Activated CD4-positive, alpha-beta memory T cell treated with anti-CD3 and anti-CD28 coated beads for 36 hours (primary cell): ENCODE measurements at regions of chr7 and their contacts with region 1.

Region 1: GRCh38 chr7:99504603-99505323 is at the start of gene ZKSCAN5:
- DNase-seq: peak; percentile 98
- H3K4me3 Mint-ChIP-seq: peak within 1 kb of the TSS; percentile 96
- H3K27ac Mint-ChIP-seq: peak within 1 kb of the TSS; percentile 98
- H3K4me1 Mint-ChIP-seq: peaks cover 21% of the 10 kb centered on the region
- H3K27me3 Mint-ChIP-seq: no peaks in the 10 kb centered on the region
- total RNA-seq, gene ZKSCAN5: 7.6 to 7.7 TPM

Region 2: GRCh38 chr7:99408379-99409191 is 96.2 kb before region 1 on chr7 and contains the starts of genes BUD31 and PDAP1:
- CTCF ChIA-PET with region 1: interaction called, 4 read pairs
- POLR2A ChIA-PET with region 1: no interaction called
- intact Hi-C with region 1: loop called (anchors 2 kb)
- DNase-seq: peak; percentile 97
- H3K4me3 Mint-ChIP-seq: peak within 1 kb of the TSS; percentile 99
- H3K27ac Mint-ChIP-seq: peak within 1 kb of the TSS; percentile 99
- H3K4me1 Mint-ChIP-seq: peaks cover 41% of the 10 kb centered on the region
- H3K27me3 Mint-ChIP-seq: no peaks in the 10 kb centered on the region
- total RNA-seq, gene BUD31: 143 to 149 TPM
- total RNA-seq, gene PDAP1: 149 to 162 TPM

Region 3: GRCh38 chr7:99472561-99473243 is 32.1 kb before region 1 on chr7 and contains the start of gene ZNF789:
- CTCF ChIA-PET with region 1: no interaction called
- POLR2A ChIA-PET with region 1: interaction called, 9 read pairs
- intact Hi-C with region 1: loop called (anchors 1 kb)
- DNase-seq: peak; percentile 99
- H3K4me3 Mint-ChIP-seq: peak within 1 kb of the TSS; percentile 100
- H3K27ac Mint-ChIP-seq: peak within 1 kb of the TSS; percentile 88
- H3K4me1 Mint-ChIP-seq: peaks cover 33% of the 10 kb centered on the region
- H3K27me3 Mint-ChIP-seq: no peaks in the 10 kb centered on the region
- total RNA-seq, gene ZNF789: 14.2 to 15.6 TPM

Region 4: DNA sequence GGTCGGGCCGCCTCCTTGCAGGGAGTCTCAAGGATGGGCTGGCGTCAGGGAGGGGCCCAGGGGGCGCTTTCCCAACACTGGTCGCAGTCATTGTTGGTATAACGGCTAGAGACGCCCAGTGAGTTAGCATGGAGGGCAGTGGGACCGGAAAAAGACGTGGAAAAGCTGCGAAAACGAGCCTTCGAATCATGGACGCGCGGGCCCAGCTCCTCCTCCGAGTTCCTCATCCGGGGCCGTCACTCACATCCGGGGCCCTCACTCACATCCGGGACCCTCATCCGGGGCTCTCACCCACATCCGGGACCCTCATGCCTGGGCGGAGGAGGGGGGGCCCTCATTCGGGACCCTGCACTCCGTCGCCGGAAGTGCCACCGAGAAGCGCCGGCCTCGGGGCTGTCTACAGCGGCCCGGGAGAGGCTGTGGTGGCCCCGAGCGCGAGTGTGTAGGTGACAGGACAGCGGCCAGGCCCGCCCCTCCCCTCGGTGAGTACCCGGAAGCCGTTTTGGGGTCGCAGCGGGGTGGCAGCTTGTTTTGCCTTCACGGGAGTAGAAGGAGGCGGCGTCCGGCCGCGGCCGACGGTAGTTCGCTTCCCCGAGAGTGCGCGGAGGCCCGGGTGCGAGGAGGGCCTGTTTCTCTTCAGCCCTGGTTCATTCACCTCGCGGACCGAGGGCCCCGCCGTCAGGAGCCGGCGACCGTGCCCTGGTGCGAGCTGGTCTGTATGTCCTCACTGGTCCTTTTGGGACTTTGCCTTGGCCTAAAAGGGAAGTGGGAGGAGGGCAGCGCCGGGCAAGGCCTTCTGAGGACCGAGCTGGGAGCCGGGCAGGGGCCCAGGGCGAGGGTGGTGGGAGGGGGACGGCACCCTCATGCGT is 53.8 kb after region 1 on chr7 and contains the start of gene ZNF655:
- CTCF ChIA-PET with region 1: no interaction called
- POLR2A ChIA-PET with region 1: interaction called, 13 read pairs
- intact Hi-C with region 1: no loop called
- DNase-seq: peak; percentile 92
- H3K4me3 Mint-ChIP-seq: peak within 1 kb of the TSS; percentile 97
- H3K27ac Mint-ChIP-seq: peak within 1 kb of the TSS; percentile 97
- H3K4me1 Mint-ChIP-seq: peaks cover 43% of the 10 kb centered on the region
- H3K27me3 Mint-ChIP-seq: no peaks in the 10 kb centered on the region
- total RNA-seq, gene ZNF655: 47.9 to 49.8 TPM

Region 5: DNA sequence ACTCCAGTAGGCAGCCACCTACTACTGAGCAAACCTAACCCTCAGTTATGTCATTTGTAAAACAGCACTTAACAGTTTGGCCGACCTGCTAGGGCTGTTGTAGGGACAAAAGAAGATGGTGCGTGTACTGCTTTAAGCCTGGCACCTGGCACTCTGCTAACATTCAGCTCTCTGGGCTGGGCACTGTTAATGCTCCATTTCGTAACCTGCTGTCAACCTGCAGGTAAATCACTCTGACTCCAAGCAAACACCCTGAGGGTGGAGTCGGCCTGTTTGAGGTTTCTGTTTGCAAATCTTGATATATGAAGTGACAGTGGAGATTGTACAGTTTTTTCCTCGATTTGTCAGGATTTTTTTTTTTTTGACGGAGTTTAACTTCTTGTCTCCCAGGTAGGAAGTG is 517.9 kb after region 1 on chr7:
- CTCF ChIA-PET with region 1: no interaction called
- POLR2A ChIA-PET with region 1: no interaction called
- intact Hi-C with region 1: loop called (anchors 10 kb)
- DNase-seq: no peak
- H3K4me3 Mint-ChIP-seq: no peak overlapping the region
- H3K27ac Mint-ChIP-seq: no peak overlapping the region
- H3K4me1 Mint-ChIP-seq: peaks cover 58% of the 10 kb centered on the region
- H3K27me3 Mint-ChIP-seq: no peaks in the 10 kb centered on the region

Region 6: GRCh38 chr7:101251871-101252659 is 1747.3 kb after region 1 on chr7:
- CTCF ChIA-PET with region 1: no interaction called
- POLR2A ChIA-PET with region 1: no interaction called
- intact Hi-C with region 1: loop called (anchors 5 kb)
- DNase-seq: peak; percentile 99
- H3K4me3 Mint-ChIP-seq: peak overlapping the region; percentile 95
- H3K27ac Mint-ChIP-seq: peak overlapping the region; percentile 92
- H3K4me1 Mint-ChIP-seq: peaks cover 20% of the 10 kb centered on the region
- H3K27me3 Mint-ChIP-seq: peaks cover 3% of the 10 kb centered on the region